PC-9 (cell line): ENCODE measurements at regions of chr2 and their contacts with region 1.

Region 1: DNA sequence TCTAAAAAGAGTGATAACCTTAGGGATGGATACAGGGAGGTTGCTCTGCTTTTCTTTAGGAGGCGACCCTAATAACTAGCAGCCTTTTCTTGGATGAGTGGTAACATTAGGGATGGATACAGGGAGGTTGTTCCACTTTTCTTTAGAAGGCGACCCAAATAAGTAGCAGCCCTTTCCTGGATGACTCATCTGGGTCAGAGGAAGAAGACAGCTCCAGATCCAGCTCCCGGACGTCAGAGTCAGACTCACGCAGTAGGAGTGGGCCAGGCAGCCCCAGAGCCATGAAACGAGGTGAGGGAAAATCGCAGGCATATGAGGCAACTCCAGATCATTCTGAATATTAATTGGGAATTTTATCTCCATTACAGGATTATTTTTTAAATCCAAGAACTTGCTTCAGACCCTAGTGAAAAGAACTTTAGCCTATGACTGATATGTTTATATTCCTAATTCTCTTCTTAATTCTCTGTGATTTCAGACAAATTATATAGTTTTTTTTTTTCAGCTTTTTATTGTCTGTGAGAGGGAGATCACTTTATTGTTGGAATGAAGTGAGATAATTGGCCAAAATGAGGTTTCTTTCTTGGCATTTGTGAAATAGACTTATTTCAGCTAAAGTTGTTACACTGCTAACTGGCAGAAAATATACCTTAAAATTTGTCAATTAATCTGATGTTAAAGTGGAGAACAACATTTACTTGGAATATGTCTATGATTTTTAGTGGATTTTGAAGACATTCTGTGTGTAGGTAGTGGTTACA is 31.2 kb upstream of the C1GALT1C1L start:
- DNase-seq: peak in 1 of 2 experiments; percentile 36
- H3K4me3 ChIP-seq: no peak overlapping the region
- H3K27ac ChIP-seq: no peak overlapping the region
- H3K4me1 ChIP-seq: 0 out of 2 replicates have a peak, but pooled peaks cover 5% of the 10 kb centered on the region
- H3K27me3 ChIP-seq: no peaks in the 10 kb centered on the region
- CTCF ChIP-seq: no peak

Region 2: DNA sequence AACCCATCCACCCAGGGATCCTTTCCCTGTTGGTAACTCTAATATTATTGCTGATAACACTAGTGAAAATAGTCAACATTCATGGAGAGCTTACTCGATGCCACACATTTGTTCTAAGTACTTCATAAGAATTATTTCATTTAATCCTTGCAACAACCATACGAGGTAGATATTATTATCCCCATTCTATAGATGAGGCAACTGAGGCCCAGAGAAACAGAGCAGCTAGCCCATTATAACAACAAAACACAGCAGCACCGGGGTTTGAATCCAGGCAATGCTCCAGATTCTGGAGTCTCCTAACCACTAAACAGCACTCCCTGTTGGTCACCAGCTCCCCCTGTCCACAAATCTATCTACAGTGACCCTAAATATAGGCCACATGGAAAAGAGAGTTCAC is 1750.0 kb before region 1 on chr2:
- CTCF ChIA-PET with region 1: no interaction called
- POLR2A ChIA-PET with region 1: interaction called, 27 read pairs
- intact Hi-C with region 1: no loop called
- DNase-seq: no peak
- H3K4me3 ChIP-seq: no peak overlapping the region
- H3K27ac ChIP-seq: no peak overlapping the region
- H3K4me1 ChIP-seq: peaks cover 39% of the 10 kb centered on the region
- H3K27me3 ChIP-seq: no peaks in the 10 kb centered on the region
- CTCF ChIP-seq: no peak

Region 3: GRCh38 chr2:43737097-43737854 is 29.8 kb after region 1 on chr2:
- CTCF ChIA-PET with region 1: interaction called, 10 read pairs
- POLR2A ChIA-PET with region 1: no interaction called
- intact Hi-C with region 1: no loop called
- DNase-seq: no peak
- H3K4me3 ChIP-seq: no peak overlapping the region
- H3K27ac ChIP-seq: no peak overlapping the region
- H3K4me1 ChIP-seq: no peaks in the 10 kb centered on the region
- H3K27me3 ChIP-seq: no peaks in the 10 kb centered on the region
- CTCF ChIP-seq: no peak